ENCODE measurements at regions of chr11 and their contacts with region 1.

Region 1: GRCh38 chr11:122808478-122808869 is 29.8 kb upstream of the CRTAM start:
- DNase-seq: peak; percentile 42
- H3K4me3 ChIP-seq: no peak overlapping the region
- H3K27ac ChIP-seq: no peak overlapping the region
- H3K4me1 ChIP-seq: no peaks in the 10 kb centered on the region
- H3K27me3 ChIP-seq: no peaks in the 10 kb centered on the region
- CTCF ChIP-seq: no peak
- POLR2A ChIP-seq: no peak

Region 2: GRCh38 chr11:122604621-122605020 is 203.9 kb before region 1 on chr11:
- CTCF ChIA-PET with region 1: no interaction called
- POLR2A ChIA-PET with region 1: no interaction called
- dilution Hi-C with region 1: no loop called
- intact Hi-C with region 1: no loop called
- DNase-seq: no peak
- H3K4me3 ChIP-seq: no peak overlapping the region
- H3K27ac ChIP-seq: no peak overlapping the region
- H3K4me1 ChIP-seq: no peaks in the 10 kb centered on the region
- H3K27me3 ChIP-seq: peaks cover 0 to 2% of the 10 kb centered on the region in 2 experiments
- CTCF ChIP-seq: no peak
- POLR2A ChIP-seq: no peak

Region 3: DNA sequence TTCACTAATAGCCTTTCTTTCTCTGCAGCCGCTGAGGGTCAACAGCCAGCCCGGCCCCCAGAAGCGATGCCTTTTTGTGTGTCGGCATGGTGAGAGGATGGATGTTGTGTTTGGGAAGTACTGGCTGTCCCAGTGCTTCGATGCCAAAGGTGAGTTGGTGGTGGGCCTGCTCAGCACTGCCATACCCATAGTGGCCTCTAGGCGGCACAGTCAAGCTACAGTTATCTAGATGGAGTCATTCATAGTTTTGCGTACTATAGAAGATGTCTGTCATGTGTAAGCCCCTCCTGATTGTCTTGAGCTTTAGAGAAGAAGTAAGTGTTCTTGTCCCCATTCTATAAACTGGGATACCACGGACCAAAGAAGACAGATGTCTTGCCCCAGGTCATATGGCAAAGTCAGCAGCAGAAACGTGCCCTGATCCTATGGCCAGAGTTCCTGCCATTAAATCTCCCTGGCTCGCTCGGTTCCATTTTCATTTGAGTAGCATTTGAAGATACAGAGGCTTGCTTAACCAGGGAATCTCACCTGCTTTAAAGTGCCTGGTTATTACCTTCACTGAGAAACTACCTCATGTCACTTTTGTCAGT is 12.3 kb before region 1 on chr11:
- CTCF ChIA-PET with region 1: interaction called, 19 read pairs
- POLR2A ChIA-PET with region 1: no interaction called
- dilution Hi-C with region 1: no loop called
- intact Hi-C with region 1: no loop called
- DNase-seq: peak; percentile 42
- H3K4me3 ChIP-seq: no peak overlapping the region
- H3K27ac ChIP-seq: no peak overlapping the region
- H3K4me1 ChIP-seq: peaks cover 7% of the 10 kb centered on the region
- H3K27me3 ChIP-seq: no peaks in the 10 kb centered on the region
- CTCF ChIP-seq: peak; percentile 78 to 81
- POLR2A ChIP-seq: no peak

Region 4: DNA sequence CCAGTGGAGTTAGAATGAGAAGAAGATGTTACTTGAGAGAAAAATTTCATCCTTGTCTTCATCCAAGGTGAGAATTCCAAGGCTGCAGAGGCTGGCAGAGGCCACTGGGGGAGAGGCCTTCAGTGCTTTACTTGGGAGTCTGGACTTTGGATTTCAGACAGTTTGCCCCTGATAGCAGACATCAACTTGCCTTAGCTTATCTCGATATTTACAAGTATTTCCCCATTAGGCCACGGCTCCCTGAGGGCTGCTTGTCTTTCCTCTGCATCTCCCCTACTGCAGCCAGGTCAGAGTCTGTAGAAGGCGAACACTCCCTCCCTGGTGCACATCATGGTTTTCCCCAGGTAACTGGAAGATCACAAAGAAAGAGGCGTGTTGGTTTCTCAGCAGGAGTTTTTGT is 203.0 kb after region 1 on chr11:
- CTCF ChIA-PET with region 1: no interaction called
- POLR2A ChIA-PET with region 1: no interaction called
- dilution Hi-C with region 1: no loop called
- intact Hi-C with region 1: no loop called
- DNase-seq: no peak
- H3K4me3 ChIP-seq: no peak overlapping the region
- H3K27ac ChIP-seq: no peak overlapping the region
- H3K4me1 ChIP-seq: no peaks in the 10 kb centered on the region
- H3K27me3 ChIP-seq: peaks cover 0 to 6% of the 10 kb centered on the region in 2 experiments
- CTCF ChIP-seq: no peak
- POLR2A ChIP-seq: no peak

Measured in endothelial cell of umbilical vein (primary cell).